GM13977 (cell line): ENCODE measurements at regions of chr3 and their contacts with region 1.

Region 1: GRCh38 chr3:16247276-16248061 is 17.3 kb downstream of the DPH3 start:
- DNase-seq: peak; percentile 77
- CTCF ChIP-seq: peak; percentile 94

Region 2: GRCh38 chr3:15953841-15954240 is 293.6 kb before region 1 on chr3:
- in situ Hi-C with region 1: no loop called
- DNase-seq: peak; percentile 19
- CTCF ChIP-seq: peak; percentile 21

Region 3: GRCh38 chr3:16056210-16056607 is 191.3 kb before region 1 on chr3:
- in situ Hi-C with region 1: loop called (anchors 10 kb)
- DNase-seq: no peak
- CTCF ChIP-seq: no peak